ENCODE measurements at regions of chr19 and their contacts with region 1.

Region 1: GRCh38 chr19:55289117-55289796 is 5.5 kb downstream of the BRSK1 start:
- DNase-seq: no peak
- H3K4me3 ChIP-seq: no peak overlapping the region
- H3K4me3 Mint-ChIP-seq: no peak overlapping the region
- H3K27ac Mint-ChIP-seq: no peak overlapping the region
- H3K4me1 ChIP-seq: peaks cover 10% of the 10 kb centered on the region
- H3K4me1 Mint-ChIP-seq: peaks cover 8% of the 10 kb centered on the region
- H3K27me3 ChIP-seq: no peaks in the 10 kb centered on the region
- H3K27me3 Mint-ChIP-seq: no peaks in the 10 kb centered on the region
- CTCF ChIP-seq: no peak

Region 2: GRCh38 chr19:55241143-55242088 is 47.8 kb before region 1 on chr19:
- CTCF ChIA-PET with region 1: no interaction called
- POLR2A ChIA-PET with region 1: no interaction called
- intact Hi-C with region 1: no loop called
- DNase-seq: no peak
- H3K4me3 ChIP-seq: no peak overlapping the region
- H3K4me3 Mint-ChIP-seq: no peak overlapping the region
- H3K27ac Mint-ChIP-seq: no peak overlapping the region
- H3K4me1 ChIP-seq: no peaks in the 10 kb centered on the region
- H3K4me1 Mint-ChIP-seq: no peaks in the 10 kb centered on the region
- H3K27me3 ChIP-seq: no peaks in the 10 kb centered on the region
- H3K27me3 Mint-ChIP-seq: no peaks in the 10 kb centered on the region
- CTCF ChIP-seq: no peak

Region 3: DNA sequence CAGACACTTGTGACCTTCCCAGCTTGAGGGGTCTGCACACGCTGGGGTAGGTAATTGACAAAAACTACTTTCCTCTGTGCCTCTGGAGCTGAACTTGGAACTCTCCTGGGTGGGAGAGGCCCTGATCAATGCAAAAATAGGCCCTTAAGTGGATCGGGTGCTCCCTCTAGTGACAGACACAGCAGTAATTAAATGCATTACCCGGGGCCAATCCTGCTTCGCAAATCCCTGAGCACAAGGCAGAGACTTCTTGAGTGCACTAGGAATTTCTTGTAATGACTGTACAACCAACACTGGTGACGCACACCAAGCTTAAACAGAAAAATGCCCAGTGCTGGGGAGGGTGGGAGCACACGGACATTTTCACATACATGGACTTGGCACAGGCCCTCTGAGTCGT is 128.9 kb after region 1 on chr19:
- CTCF ChIA-PET with region 1: no interaction called
- POLR2A ChIA-PET with region 1: no interaction called
- intact Hi-C with region 1: loop called (anchors 2 kb)
- DNase-seq: peak; percentile 77 to 81
- H3K4me3 ChIP-seq: no peak overlapping the region
- H3K4me3 Mint-ChIP-seq: no peak overlapping the region
- H3K27ac Mint-ChIP-seq: no peak overlapping the region
- H3K4me1 ChIP-seq: no peaks in the 10 kb centered on the region
- H3K4me1 Mint-ChIP-seq: peaks cover 6% of the 10 kb centered on the region
- H3K27me3 ChIP-seq: no peaks in the 10 kb centered on the region
- H3K27me3 Mint-ChIP-seq: no peaks in the 10 kb centered on the region
- CTCF ChIP-seq: peak; percentile 76 to 85